Caco-2 (cell line): ENCODE measurements at regions of chr9 and their contacts with region 1.

Region 1: DNA sequence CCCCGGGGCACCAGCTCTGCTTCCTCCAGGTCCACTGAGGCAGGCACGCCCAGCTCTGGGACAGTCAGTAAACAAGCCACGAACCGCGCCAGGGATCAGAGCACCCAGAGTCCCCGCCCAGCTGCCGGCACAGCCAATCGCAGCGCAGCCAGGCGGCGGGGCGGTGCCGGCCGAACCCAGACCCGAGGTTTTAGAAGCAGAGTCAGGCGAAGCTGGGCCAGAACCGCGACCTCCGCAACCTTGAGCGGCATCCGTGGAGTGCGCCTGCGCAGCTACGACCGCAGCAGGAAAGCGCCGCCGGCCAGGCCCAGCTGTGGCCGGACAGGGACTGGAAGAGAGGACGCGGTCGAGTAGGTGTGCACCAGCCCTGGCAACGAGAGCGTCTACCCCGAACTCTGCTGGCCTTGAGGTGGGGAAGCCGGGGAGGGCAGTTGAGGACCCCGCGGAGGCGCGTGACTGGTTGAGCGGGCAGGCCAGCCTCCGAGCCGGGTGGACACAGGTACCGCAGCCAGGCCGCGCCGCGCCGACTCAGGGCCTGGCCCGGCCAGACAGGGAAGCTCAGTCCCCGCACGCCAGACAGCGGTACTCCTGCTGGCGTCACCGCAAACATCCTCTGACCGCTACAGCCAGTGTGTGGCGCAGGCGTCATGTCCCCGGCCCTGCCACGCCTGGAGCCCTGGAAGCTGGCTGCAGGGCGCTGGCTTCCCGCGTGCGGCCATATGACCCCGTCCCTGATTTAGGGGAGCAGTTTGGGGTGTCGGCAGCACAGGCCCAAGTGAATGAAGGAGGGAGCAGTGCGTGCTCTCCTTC is at the start of gene CTSL:
- DNase-seq: peak; percentile 79 to 83
- H3K4me3 ChIP-seq: peak within 1 kb of the TSS; percentile 75
- H3K4me3 Mint-ChIP-seq: peak within 1 kb of the TSS; percentile 98
- H3K27ac Mint-ChIP-seq: peak within 1 kb of the TSS; percentile 93
- H3K4me1 ChIP-seq: no peaks in the 10 kb centered on the region
- H3K4me1 Mint-ChIP-seq: no peaks in the 10 kb centered on the region
- H3K27me3 ChIP-seq: no peaks in the 10 kb centered on the region
- H3K27me3 Mint-ChIP-seq: no peaks in the 10 kb centered on the region
- CTCF ChIP-seq: peak in 1 of 2 experiments; percentile 35
- total RNA-seq, gene CTSL: 40.2 and 50.1 TPM in 2 replicates

Region 2: GRCh38 chr9:87684627-87685219 is 41.4 kb before region 1 on chr9:
- CTCF ChIA-PET with region 1: interaction called, 4 read pairs
- POLR2A ChIA-PET with region 1: interaction called, 3 read pairs
- intact Hi-C with region 1: loop called (anchors 5 kb)
- DNase-seq: peak in 1 of 2 experiments; percentile 53
- H3K4me3 ChIP-seq: no peak overlapping the region
- H3K4me3 Mint-ChIP-seq: no peak overlapping the region
- H3K27ac Mint-ChIP-seq: no peak overlapping the region
- H3K4me1 ChIP-seq: no peaks in the 10 kb centered on the region
- H3K4me1 Mint-ChIP-seq: no peaks in the 10 kb centered on the region
- H3K27me3 ChIP-seq: no peaks in the 10 kb centered on the region
- H3K27me3 Mint-ChIP-seq: no peaks in the 10 kb centered on the region
- CTCF ChIP-seq: peak; percentile 39 to 57

Region 3: GRCh38 chr9:87751869-87752268 is 25.8 kb after region 1 on chr9:
- CTCF ChIA-PET with region 1: no interaction called
- POLR2A ChIA-PET with region 1: no interaction called
- intact Hi-C with region 1: no loop called
- DNase-seq: no peak
- H3K4me3 ChIP-seq: no peak overlapping the region
- H3K4me3 Mint-ChIP-seq: no peak overlapping the region
- H3K27ac Mint-ChIP-seq: no peak overlapping the region
- H3K4me1 ChIP-seq: no peaks in the 10 kb centered on the region
- H3K4me1 Mint-ChIP-seq: no peaks in the 10 kb centered on the region
- H3K27me3 ChIP-seq: no peaks in the 10 kb centered on the region
- H3K27me3 Mint-ChIP-seq: peaks cover 2% of the 10 kb centered on the region
- CTCF ChIP-seq: no peak

Region 4: GRCh38 chr9:87787735-87788134 is 61.6 kb after region 1 on chr9:
- CTCF ChIA-PET with region 1: no interaction called
- POLR2A ChIA-PET with region 1: no interaction called
- intact Hi-C with region 1: loop called (anchors 1 kb)
- DNase-seq: no peak
- H3K4me3 ChIP-seq: no peak overlapping the region
- H3K4me3 Mint-ChIP-seq: no peak overlapping the region
- H3K27ac Mint-ChIP-seq: no peak overlapping the region
- H3K4me1 ChIP-seq: peaks cover 24% of the 10 kb centered on the region
- H3K4me1 Mint-ChIP-seq: peaks cover 16% of the 10 kb centered on the region
- H3K27me3 ChIP-seq: no peaks in the 10 kb centered on the region
- H3K27me3 Mint-ChIP-seq: no peaks in the 10 kb centered on the region
- CTCF ChIP-seq: no peak

Region 5: GRCh38 chr9:87812375-87813118 is 86.4 kb after region 1 on chr9:
- CTCF ChIA-PET with region 1: interaction called, 18 read pairs
- POLR2A ChIA-PET with region 1: no interaction called
- intact Hi-C with region 1: loop called (anchors 1 kb)
- DNase-seq: peak in 1 of 2 experiments; percentile 20
- H3K4me3 ChIP-seq: no peak overlapping the region
- H3K4me3 Mint-ChIP-seq: no peak overlapping the region
- H3K27ac Mint-ChIP-seq: no peak overlapping the region
- H3K4me1 ChIP-seq: no peaks in the 10 kb centered on the region
- H3K4me1 Mint-ChIP-seq: no peaks in the 10 kb centered on the region
- H3K27me3 ChIP-seq: no peaks in the 10 kb centered on the region
- H3K27me3 Mint-ChIP-seq: no peaks in the 10 kb centered on the region
- CTCF ChIP-seq: peak; percentile 64 to 77